Natural killer cell (primary cell): ENCODE measurements at regions of chr22 and their contacts with region 1.

Region 1: DNA sequence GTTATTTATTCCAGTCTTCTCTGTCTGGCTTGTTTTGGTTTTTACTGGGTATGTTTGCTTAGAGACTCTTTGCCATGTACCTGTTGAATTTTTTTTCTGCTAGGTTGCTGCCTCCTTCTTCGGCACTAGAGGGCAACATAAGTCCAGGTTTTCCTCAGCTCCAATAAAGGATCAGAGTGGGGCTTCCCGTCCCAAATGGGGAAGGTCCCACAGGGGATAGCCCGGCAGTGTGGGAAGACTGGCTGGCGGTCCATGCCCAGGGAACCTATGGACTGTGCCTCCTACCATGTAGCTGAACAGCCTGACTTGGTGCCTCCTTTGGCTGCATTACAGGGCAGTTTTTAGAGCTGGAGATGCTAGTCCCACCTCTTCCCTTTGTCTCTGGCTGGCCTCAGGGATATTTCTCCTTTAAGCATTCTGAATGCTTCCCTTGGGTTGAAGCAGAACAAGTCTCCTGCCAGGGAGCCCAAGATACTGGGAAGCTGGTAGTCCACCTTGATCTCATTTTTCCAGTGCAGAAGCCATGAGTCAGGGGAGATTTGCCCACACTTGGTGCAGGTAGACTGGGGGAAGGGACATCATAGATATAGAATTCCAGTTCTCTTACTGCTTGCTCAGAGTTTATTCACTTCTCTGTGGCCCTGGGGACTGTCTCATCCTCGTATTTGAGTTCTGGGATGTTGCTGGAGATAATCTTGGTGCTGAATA is 60.2 kb downstream of the BRD1 start:
- DNase-seq: peak; percentile 15 to 71
- ATAC-seq: peak; percentile 47 to 70 (median 53)
- H3K4me3 ChIP-seq: no peak overlapping the region
- H3K4me3 Mint-ChIP-seq: no peak overlapping the region
- H3K27ac ChIP-seq: no peak overlapping the region
- H3K27ac Mint-ChIP-seq: no peak overlapping the region
- H3K4me1 ChIP-seq: no peaks in the 10 kb centered on the region
- H3K4me1 Mint-ChIP-seq: peaks cover 0 to 5% of the 10 kb centered on the region in 2 donors
- H3K27me3 ChIP-seq: no peaks in the 10 kb centered on the region
- H3K27me3 Mint-ChIP-seq: no peaks in the 10 kb centered on the region
- CTCF ChIP-seq: peak; percentile 50

Region 2: DNA sequence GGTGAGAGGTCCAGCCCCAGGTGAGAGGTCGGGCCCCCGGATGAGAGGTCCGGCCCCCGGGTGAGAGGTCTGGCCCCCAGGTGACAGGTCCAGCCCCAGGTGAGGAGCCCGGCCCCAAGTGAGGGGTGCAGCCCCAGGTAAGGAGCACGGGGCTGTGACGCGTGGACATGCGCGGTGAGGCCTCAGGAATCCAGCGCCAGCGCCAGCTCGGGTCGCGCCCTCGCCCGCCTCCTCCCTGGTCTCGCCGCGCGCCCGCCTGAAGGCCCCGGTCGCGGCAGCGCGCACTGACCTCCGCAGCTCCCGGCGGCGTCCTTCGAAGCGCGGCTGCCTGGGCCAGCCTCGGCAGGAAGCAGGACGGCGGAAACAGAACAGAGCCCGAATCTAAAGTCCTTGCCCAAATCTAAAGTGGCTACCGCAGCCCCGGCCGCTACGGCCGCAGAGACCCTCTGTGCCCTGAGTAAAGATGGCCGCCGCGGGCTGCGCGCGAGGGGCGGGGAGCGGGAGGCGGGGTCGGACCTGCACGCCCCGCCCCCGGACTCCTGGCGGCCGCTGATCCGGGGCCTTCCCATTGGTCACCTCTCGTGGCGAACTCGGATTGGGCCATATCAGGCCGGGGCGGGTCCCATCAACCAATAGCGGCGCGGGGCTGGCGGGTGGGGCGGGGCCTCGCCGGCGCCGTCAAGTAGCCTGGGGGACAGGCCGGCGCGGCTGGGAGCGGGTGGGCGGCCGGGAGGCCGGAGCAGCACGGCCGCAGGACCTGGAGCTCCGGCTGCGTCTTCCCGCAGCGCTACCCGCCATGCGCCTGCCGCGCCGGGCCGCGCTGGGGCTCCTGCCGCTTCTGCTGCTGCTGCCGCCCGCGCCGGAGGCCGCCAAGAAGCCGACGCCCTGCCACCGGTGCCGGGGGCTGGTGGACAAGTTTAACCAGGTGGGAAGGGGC is 150.7 kb after region 1 on chr22 and contains the starts of genes ALG12 and CRELD2:
- intact Hi-C with region 1: loop called (anchors 1 kb)
- DNase-seq: peak; percentile 96 to 97
- ATAC-seq: peak; percentile 96 to 99 (median 97)
- H3K4me3 ChIP-seq: peak within 1 kb of the TSS; percentile 76
- H3K4me3 Mint-ChIP-seq: peak within 1 kb of the TSS; percentile 86
- H3K27ac ChIP-seq: peak within 1 kb of the TSS; percentile 84
- H3K27ac Mint-ChIP-seq: peak within 1 kb of the TSS; percentile 70 to 88
- H3K4me1 ChIP-seq: peaks cover 26% of the 10 kb centered on the region
- H3K4me1 Mint-ChIP-seq: peaks cover 0 to 11% of the 10 kb centered on the region in 2 donors
- H3K27me3 ChIP-seq: no peaks in the 10 kb centered on the region
- H3K27me3 Mint-ChIP-seq: no peaks in the 10 kb centered on the region
- CTCF ChIP-seq: no peak
- total RNA-seq, gene ALG12: 17.2 to 22.7 (median 19.2) TPM
- total RNA-seq, gene CRELD2: 45.1 to 69.8 (median 48.5) TPM

Region 3: GRCh38 chr22:50044485-50045118 is 277.1 kb after region 1 on chr22:
- intact Hi-C with region 1: no loop called
- DNase-seq: no peak
- ATAC-seq: peak; percentile 43 to 62 (median 54)
- H3K4me3 ChIP-seq: no peak overlapping the region
- H3K4me3 Mint-ChIP-seq: peak overlapping the region; percentile 79
- H3K27ac ChIP-seq: no peak overlapping the region
- H3K27ac Mint-ChIP-seq: no peak overlapping the region
- H3K4me1 ChIP-seq: peaks cover 23% of the 10 kb centered on the region
- H3K4me1 Mint-ChIP-seq: peaks cover 8 to 9% of the 10 kb centered on the region in 2 donors
- H3K27me3 ChIP-seq: no peaks in the 10 kb centered on the region
- H3K27me3 Mint-ChIP-seq: peaks cover 16 to 18% of the 10 kb centered on the region in 2 donors
- CTCF ChIP-seq: no peak